Naive thymus-derived CD4-positive, alpha-beta T cell (primary cell): ENCODE measurements at regions of chrX and their contacts with region 1.

Region 1: GRCh38 chrX:20066968-20067708 is 49.6 kb downstream of the MAP7D2 start:
- DNase-seq: peak in 6 of 9 donors; percentile 8 to 40 (median 28)
- ATAC-seq: peak; percentile 69
- H3K4me3 ChIP-seq: no peak overlapping the region
- H3K4me3 Mint-ChIP-seq: no peak overlapping the region
- H3K27ac ChIP-seq: no peak overlapping the region
- H3K27ac Mint-ChIP-seq: peak overlapping the region in 1 of 9 donors; percentile 62
- H3K4me1 ChIP-seq: no peaks in the 10 kb centered on the region
- H3K4me1 Mint-ChIP-seq: peaks cover 0 to 3% (median 0%) of the 10 kb centered on the region in 7 donors
- H3K27me3 ChIP-seq: no peaks in the 10 kb centered on the region
- H3K27me3 Mint-ChIP-seq: no peaks in the 10 kb centered on the region

Region 2: DNA sequence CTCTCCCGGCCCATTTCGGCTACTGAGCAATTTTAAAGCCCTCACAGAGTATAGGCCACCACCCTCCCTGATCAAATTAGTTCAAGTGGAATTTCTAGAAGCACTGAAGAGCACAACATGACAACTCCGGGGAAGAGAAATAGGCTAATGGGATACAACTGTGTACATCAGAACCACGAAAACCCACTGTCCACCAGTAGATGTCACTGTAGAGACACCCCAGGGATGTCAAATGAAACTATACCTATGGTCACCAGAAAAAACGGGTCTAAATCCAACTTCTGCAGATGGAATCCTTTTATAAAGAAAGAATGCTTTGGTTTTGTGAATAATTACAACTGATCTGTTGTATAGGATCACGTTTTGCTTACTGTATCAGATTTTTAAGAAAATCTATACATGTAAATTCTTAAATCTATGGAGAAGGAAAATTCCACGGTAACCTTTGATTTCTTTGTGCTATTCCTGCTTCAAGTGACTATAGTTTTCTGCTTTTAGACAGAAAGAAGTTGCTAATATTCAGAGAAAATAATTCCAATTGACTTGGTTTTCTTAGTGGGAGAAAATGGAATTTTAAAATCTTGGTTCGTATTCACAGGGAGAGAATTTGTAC is 522.3 kb before region 1 on chrX:
- CTCF ChIA-PET with region 1: no interaction called
- POLR2A ChIA-PET with region 1: no interaction called
- intact Hi-C with region 1: loop called in 1 of 2 experiments (anchors 5 kb)
- DNase-seq: peak in 8 of 9 donors; percentile 9 to 43 (median 30)
- ATAC-seq: peak; percentile 76
- H3K4me3 ChIP-seq: no peak overlapping the region
- H3K4me3 Mint-ChIP-seq: no peak overlapping the region
- H3K27ac ChIP-seq: no peak overlapping the region
- H3K27ac Mint-ChIP-seq: peak overlapping the region in 5 of 9 donors; percentile 40 to 83 (median 72)
- H3K4me1 ChIP-seq: no peaks in the 10 kb centered on the region
- H3K4me1 Mint-ChIP-seq: peaks cover 0 to 12% (median 3%) of the 10 kb centered on the region in 7 donors
- H3K27me3 ChIP-seq: no peaks in the 10 kb centered on the region
- H3K27me3 Mint-ChIP-seq: no peaks in the 10 kb centered on the region

Region 3: GRCh38 chrX:19566359-19567222 is 500.5 kb before region 1 on chrX:
- CTCF ChIA-PET with region 1: no interaction called
- POLR2A ChIA-PET with region 1: no interaction called
- intact Hi-C with region 1: loop called in 1 of 2 experiments (anchors 10 kb)
- DNase-seq: no peak
- ATAC-seq: peak; percentile 65
- H3K4me3 ChIP-seq: no peak overlapping the region
- H3K4me3 Mint-ChIP-seq: peak overlapping the region in 1 of 10 donors; percentile 62
- H3K27ac ChIP-seq: no peak overlapping the region
- H3K27ac Mint-ChIP-seq: peak overlapping the region in 6 of 9 donors; percentile 23 to 83 (median 52)
- H3K4me1 ChIP-seq: no peaks in the 10 kb centered on the region
- H3K4me1 Mint-ChIP-seq: peaks cover 0 to 33% (median 0%) of the 10 kb centered on the region in 7 donors
- H3K27me3 ChIP-seq: no peaks in the 10 kb centered on the region
- H3K27me3 Mint-ChIP-seq: no peaks in the 10 kb centered on the region

Region 4: DNA sequence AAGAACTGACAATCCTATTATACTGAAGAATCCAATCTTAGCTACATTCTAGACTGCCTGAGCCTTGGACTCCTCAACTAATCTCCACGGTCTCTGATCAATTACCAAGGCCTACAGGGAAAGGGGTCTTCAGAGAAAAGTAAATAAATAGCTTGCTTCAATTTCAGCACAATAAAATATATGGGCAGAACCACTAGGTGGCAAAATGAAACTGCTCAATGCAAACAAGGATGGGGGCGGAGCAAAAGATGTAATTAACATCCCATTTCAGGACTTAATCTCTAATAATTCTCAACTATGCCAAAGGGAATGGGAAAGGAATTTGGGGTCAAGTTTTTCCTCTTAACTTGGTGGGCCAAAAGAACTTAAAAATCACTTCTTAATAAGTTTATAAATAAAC is 473.4 kb before region 1 on chrX:
- CTCF ChIA-PET with region 1: no interaction called
- POLR2A ChIA-PET with region 1: no interaction called
- intact Hi-C with region 1: loop called in 1 of 2 experiments (anchors 2 kb)
- DNase-seq: peak in 7 of 9 donors; percentile 11 to 36 (median 21)
- ATAC-seq: peak; percentile 50
- H3K4me3 ChIP-seq: no peak overlapping the region
- H3K4me3 Mint-ChIP-seq: no peak overlapping the region
- H3K27ac ChIP-seq: no peak overlapping the region
- H3K27ac Mint-ChIP-seq: peak overlapping the region in 3 of 9 donors; percentile 10 to 66 (median 56)
- H3K4me1 ChIP-seq: no peaks in the 10 kb centered on the region
- H3K4me1 Mint-ChIP-seq: peaks cover 0 to 21% (median 10%) of the 10 kb centered on the region in 7 donors
- H3K27me3 ChIP-seq: no peaks in the 10 kb centered on the region
- H3K27me3 Mint-ChIP-seq: no peaks in the 10 kb centered on the region

Region 5: GRCh38 chrX:19904778-19905367 is 162.3 kb before region 1 on chrX:
- CTCF ChIA-PET with region 1: interaction called, 20 read pairs
- POLR2A ChIA-PET with region 1: no interaction called
- intact Hi-C with region 1: loop called (anchors 1 kb)
- DNase-seq: peak in 6 of 9 donors; percentile 16 to 54 (median 42)
- ATAC-seq: peak; percentile 74
- H3K4me3 ChIP-seq: no peak overlapping the region
- H3K4me3 Mint-ChIP-seq: no peak overlapping the region
- H3K27ac ChIP-seq: no peak overlapping the region
- H3K27ac Mint-ChIP-seq: no peak overlapping the region
- H3K4me1 ChIP-seq: no peaks in the 10 kb centered on the region
- H3K4me1 Mint-ChIP-seq: peaks cover 0 to 17% (median 6%) of the 10 kb centered on the region in 7 donors
- H3K27me3 ChIP-seq: no peaks in the 10 kb centered on the region
- H3K27me3 Mint-ChIP-seq: no peaks in the 10 kb centered on the region

Region 6: DNA sequence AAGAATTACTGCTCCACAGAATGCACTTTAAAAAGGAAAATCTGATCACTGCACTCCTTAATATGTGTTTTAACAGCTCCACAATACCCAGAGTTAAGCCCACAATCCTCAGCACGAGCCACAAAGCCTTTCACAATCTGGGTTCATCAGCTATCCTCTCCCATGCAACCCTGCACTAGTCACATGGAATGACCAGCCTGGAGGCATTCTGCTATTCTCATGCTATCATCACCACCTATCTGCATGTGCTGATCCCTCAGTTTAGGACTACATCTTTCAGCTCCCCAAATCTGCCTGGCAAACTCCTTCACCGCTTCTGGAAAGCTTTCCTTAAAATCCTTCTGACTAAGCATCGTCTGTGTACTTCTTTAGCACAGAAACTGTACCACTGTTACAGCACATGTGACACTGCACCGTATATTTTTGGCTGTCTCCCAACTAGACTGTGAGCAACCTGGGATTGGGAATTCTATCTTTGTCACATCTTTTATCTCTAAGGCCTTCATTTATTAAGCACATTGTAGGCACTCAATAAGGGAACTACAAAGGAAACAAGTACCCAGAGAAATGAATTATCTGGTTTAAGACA is 92.8 kb after region 1 on chrX:
- CTCF ChIA-PET with region 1: no interaction called
- POLR2A ChIA-PET with region 1: no interaction called
- intact Hi-C with region 1: no loop called
- DNase-seq: no peak
- ATAC-seq: no peak
- H3K4me3 ChIP-seq: no peak overlapping the region
- H3K4me3 Mint-ChIP-seq: no peak overlapping the region
- H3K27ac ChIP-seq: no peak overlapping the region
- H3K27ac Mint-ChIP-seq: peak overlapping the region in 2 of 9 donors; percentile 27 to 46
- H3K4me1 ChIP-seq: no peaks in the 10 kb centered on the region
- H3K4me1 Mint-ChIP-seq: peaks cover 0 to 7% (median 0%) of the 10 kb centered on the region in 7 donors
- H3K27me3 ChIP-seq: no peaks in the 10 kb centered on the region
- H3K27me3 Mint-ChIP-seq: no peaks in the 10 kb centered on the region